Right cardiac atrium (tissue), 5 donors: ENCODE measurements at regions of chr3 and their contacts with region 1.

Region 1: DNA sequence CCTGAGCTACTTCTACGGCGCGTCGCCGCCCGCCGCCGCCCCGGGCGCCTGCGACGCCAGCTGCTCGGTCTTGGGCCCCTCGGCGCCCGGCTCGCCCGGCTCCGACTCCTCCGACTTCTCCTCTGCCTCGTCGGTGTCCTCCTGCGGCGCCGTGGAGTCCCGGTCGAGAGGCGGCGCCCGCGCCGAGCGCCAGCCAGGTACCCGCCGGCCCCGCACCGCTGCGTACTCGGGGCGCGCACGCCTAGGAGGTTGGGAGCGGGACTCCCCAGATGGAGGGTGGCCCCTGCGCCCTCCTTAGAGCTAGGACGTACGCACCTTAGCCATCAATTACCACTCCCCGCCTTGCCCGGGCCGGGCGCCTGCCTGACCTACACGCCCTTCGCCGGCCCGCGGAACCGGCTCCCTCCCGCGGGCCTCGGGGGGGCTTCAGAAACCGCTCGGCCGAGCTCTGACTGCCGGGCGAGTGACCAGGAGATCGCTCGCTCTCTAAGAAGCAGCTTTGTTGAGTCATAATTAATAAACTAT is 469 bp downstream of the NFKBIZ start:
- DNase-seq: peak; percentile 54 to 82 (median 76)
- ATAC-seq: peak; percentile 34 to 35
- H3K4me3 ChIP-seq: peak overlapping the region; percentile 88
- H3K27ac ChIP-seq: peak overlapping the region; percentile 100
- H3K4me1 ChIP-seq: no peaks in the 10 kb centered on the region
- H3K27me3 ChIP-seq: no peaks in the 10 kb centered on the region

Region 2: GRCh38 chr3:101803173-101803782 is 46.5 kb before region 1 on chr3:
- intact Hi-C with region 1: loop called in 1 of 4 experiments (anchors 10 kb)
- DNase-seq: peak in 1 of 3 donors; percentile 44
- ATAC-seq: peak; percentile 87 to 92
- H3K4me3 ChIP-seq: no peak overlapping the region
- H3K27ac ChIP-seq: no peak overlapping the region
- H3K4me1 ChIP-seq: peaks cover 2% of the 10 kb centered on the region
- H3K27me3 ChIP-seq: no peaks in the 10 kb centered on the region

Region 3: GRCh38 chr3:101926594-101927105 is 76.9 kb after region 1 on chr3:
- intact Hi-C with region 1: no loop called
- DNase-seq: no peak
- ATAC-seq: peak; percentile 40 to 81
- H3K4me3 ChIP-seq: no peak overlapping the region
- H3K27ac ChIP-seq: no peak overlapping the region
- H3K4me1 ChIP-seq: no peaks in the 10 kb centered on the region
- H3K27me3 ChIP-seq: no peaks in the 10 kb centered on the region